ENCODE measurements at regions of chrX and their contacts with region 1.

Region 1: GRCh38 chrX:50769389-50770063 is 44.5 kb downstream of the SHROOM4 start:
- DNase-seq: peak in 9 of 10 donors; percentile 22 to 76 (median 47)
- H3K4me3 ChIP-seq: no peak overlapping the region
- H3K27ac ChIP-seq: peak overlapping the region in 44 of 59 donors; percentile 1 to 80 (median 56)
- H3K27me3 ChIP-seq: peaks cover 0 to 81% (median 30%) of the 10 kb centered on the region in 45 donors
- CTCF ChIP-seq: no peak

Region 2: GRCh38 chrX:50799531-50799961 is 30.0 kb after region 1 on chrX:
- intact Hi-C with region 1: loop called in 1 of 2 experiments (anchors 2 kb)
- DNase-seq: no peak
- H3K4me3 ChIP-seq: no peak overlapping the region
- H3K27ac ChIP-seq: peak overlapping the region in 3 of 59 donors; percentile 7 to 36 (median 23)
- H3K27me3 ChIP-seq: peaks cover 0 to 77% (median 12%) of the 10 kb centered on the region in 45 donors
- CTCF ChIP-seq: no peak